Activated CD4-positive, alpha-beta T cell treated with anti-CD3 and anti-CD28 coated beads for 36 hours (primary cell): ENCODE measurements at regions of chr3 and their contacts with region 1.

Region 1: GRCh38 chr3:163490119-163490518 is 1588.2 kb downstream of the SI start:
- DNase-seq: peak; percentile 66
- ATAC-seq: no peak
- H3K4me3 Mint-ChIP-seq: no peak overlapping the region
- H3K27ac Mint-ChIP-seq: no peak overlapping the region
- H3K4me1 Mint-ChIP-seq: no peaks in the 10 kb centered on the region
- H3K27me3 Mint-ChIP-seq: no peaks in the 10 kb centered on the region

Region 2: GRCh38 chr3:161559177-161559998 is 1930.7 kb before region 1 on chr3:
- CTCF ChIA-PET with region 1: no interaction called
- POLR2A ChIA-PET with region 1: no interaction called
- intact Hi-C with region 1: loop called in 1 of 2 experiments (anchors 1 kb)
- DNase-seq: peak; percentile 13
- ATAC-seq: no peak
- H3K4me3 Mint-ChIP-seq: no peak overlapping the region
- H3K27ac Mint-ChIP-seq: no peak overlapping the region
- H3K4me1 Mint-ChIP-seq: no peaks in the 10 kb centered on the region
- H3K27me3 Mint-ChIP-seq: peaks cover 2% of the 10 kb centered on the region

Region 3: DNA sequence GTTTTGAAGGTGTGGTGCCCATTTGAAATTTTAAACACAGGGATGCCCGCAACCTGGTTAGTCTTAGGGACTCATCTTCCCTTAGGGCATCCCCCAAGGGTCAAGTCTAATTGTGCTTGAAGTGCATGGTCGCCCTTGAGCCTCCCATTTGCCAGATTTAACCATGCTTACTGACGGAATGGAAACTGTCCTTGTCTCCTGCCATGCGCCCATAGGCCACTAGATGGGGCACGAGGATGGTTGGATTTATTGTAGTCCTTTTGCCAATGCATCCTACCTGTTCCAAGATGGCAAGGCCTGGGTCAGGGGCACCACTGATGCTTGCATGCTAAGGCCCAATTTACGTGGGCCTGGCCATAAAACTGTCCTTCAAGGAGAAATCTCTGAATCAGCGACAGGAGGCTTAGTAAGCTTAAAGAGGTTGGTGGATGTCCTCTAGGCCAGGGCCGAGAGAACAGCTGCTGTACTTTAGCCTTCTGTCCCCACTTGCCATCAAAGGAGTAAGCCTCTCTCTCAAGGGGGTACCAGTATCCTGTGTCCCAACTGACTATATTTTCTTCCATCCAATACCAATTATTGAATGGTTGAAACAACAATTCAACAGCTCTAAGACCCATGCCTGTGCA is 1638.1 kb before region 1 on chr3:
- CTCF ChIA-PET with region 1: no interaction called
- POLR2A ChIA-PET with region 1: no interaction called
- intact Hi-C with region 1: loop called in 1 of 2 experiments (anchors 2 kb)
- DNase-seq: peak; percentile 64
- ATAC-seq: no peak
- H3K4me3 Mint-ChIP-seq: no peak overlapping the region
- H3K27ac Mint-ChIP-seq: no peak overlapping the region
- H3K4me1 Mint-ChIP-seq: no peaks in the 10 kb centered on the region
- H3K27me3 Mint-ChIP-seq: no peaks in the 10 kb centered on the region

Region 4: DNA sequence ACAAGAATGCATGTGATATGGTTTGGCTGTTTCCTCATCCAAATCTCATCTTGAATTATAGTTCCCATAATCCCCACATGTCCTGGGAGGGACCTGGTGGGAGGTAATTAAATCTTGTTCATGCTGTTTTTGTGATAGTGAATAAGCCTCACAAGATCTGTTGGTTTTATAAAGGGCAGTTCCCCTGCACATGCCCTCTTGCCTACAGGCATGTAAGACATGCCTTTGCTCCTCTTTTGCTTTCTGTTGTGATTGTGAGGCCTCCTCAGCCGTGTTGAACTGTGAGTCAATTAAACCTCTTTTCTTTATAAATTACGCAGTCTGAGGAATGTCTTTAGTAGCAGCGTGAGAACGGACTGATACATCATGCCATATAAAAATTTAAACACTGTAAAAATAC is 456.5 kb before region 1 on chr3:
- CTCF ChIA-PET with region 1: no interaction called
- POLR2A ChIA-PET with region 1: no interaction called
- intact Hi-C with region 1: no loop called
- DNase-seq: no peak
- ATAC-seq: no peak
- H3K4me3 Mint-ChIP-seq: no peak overlapping the region
- H3K27ac Mint-ChIP-seq: no peak overlapping the region
- H3K4me1 Mint-ChIP-seq: no peaks in the 10 kb centered on the region
- H3K27me3 Mint-ChIP-seq: no peaks in the 10 kb centered on the region

Region 5: DNA sequence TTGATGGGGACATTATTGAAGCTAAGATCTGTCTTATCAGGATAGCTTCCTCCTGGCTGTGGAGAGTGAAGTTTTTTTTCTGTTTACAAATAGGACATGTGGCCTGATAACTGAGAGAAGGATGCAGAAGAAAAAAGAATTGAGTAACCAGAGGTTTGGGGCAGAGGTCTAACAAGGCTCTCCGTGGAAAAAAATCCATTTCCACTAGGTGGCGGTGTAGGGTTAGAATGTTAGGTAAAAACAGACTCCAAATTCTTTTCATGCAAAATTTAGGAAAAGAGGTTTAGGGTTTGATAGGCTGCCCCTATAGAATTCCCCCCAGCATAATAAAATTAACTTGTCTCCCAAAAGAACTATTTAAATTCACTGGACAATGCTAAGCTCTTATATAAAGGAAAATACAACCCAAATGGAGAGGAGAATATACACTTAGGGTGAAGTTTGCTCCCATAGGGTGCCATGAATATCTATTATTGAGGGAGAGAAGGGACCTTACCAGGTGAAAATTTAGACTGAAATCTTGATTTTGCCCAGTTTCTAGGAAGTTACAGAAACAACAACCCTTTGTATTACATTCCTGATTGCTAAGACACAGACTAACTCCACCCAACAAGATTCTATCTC is 433.1 kb before region 1 on chr3:
- CTCF ChIA-PET with region 1: no interaction called
- POLR2A ChIA-PET with region 1: no interaction called
- intact Hi-C with region 1: loop called in 1 of 2 experiments (anchors 1 kb)
- DNase-seq: peak; percentile 53
- ATAC-seq: no peak
- H3K4me3 Mint-ChIP-seq: no peak overlapping the region
- H3K27ac Mint-ChIP-seq: no peak overlapping the region
- H3K4me1 Mint-ChIP-seq: no peaks in the 10 kb centered on the region
- H3K27me3 Mint-ChIP-seq: no peaks in the 10 kb centered on the region

Region 6: DNA sequence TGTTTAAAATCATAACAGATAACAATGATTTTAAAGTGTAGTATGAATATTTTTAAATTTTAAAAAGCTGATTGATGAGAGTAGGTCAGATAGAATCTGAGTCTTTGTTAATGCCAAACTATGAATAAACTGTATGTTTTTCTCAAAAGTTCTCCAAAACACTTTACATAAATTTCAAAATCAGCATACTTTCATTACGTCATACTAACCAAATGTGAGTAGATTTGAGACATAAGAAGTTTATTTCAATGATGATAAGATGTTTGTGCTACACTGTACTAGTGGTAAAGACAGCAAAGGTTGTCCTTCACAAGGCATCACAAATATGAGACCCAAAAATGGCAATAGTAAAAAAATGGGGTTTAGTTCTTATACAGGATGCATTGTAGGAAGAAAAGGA is 245.3 kb after region 1 on chr3:
- CTCF ChIA-PET with region 1: no interaction called
- POLR2A ChIA-PET with region 1: no interaction called
- intact Hi-C with region 1: no loop called
- DNase-seq: no peak
- ATAC-seq: no peak
- H3K4me3 Mint-ChIP-seq: no peak overlapping the region
- H3K27ac Mint-ChIP-seq: no peak overlapping the region
- H3K4me1 Mint-ChIP-seq: no peaks in the 10 kb centered on the region
- H3K27me3 Mint-ChIP-seq: no peaks in the 10 kb centered on the region